ENCODE measurements at regions of chr2 and their contacts with region 1.

Region 1: GRCh38 chr2:44087036-44087713 is 81.5 kb upstream of the PPM1B start:
- DNase-seq: peak; percentile 13
- H3K4me3 ChIP-seq: peak overlapping the region; percentile 27
- H3K27me3 ChIP-seq: no peaks in the 10 kb centered on the region
- CTCF ChIP-seq: peak; percentile 96

Region 2: DNA sequence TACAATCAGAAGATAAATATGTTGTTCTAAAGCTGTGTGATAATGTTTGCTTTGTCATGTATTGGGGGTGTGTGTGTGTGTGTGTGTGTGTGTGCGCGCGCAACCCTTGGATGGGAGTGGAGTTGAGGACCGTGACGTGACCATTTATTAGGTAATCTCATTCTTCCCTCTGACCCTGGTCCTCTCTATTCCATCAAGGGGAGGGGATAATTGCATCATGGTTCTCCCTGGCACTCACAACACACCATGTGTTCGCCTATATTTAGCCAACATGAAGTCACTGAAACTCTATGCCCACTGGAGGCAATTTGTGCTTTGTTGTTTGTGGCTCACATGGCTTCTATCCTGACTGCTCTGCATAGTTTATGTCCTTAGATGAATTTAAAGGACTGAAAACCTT is 11.6 kb before region 1 on chr2:
- CTCF ChIA-PET with region 1: interaction called, 11 read pairs
- POLR2A ChIA-PET with region 1: no interaction called
- DNase-seq: peak; percentile 22
- H3K4me3 ChIP-seq: no peak overlapping the region
- H3K27me3 ChIP-seq: no peaks in the 10 kb centered on the region
- CTCF ChIP-seq: no peak

Region 3: GRCh38 chr2:44098050-44098449 is 10.9 kb after region 1 on chr2:
- CTCF ChIA-PET with region 1: interaction called, 13 read pairs
- POLR2A ChIA-PET with region 1: no interaction called
- DNase-seq: no peak
- H3K4me3 ChIP-seq: no peak overlapping the region
- H3K27me3 ChIP-seq: peaks cover 4% of the 10 kb centered on the region; the same call in 1 of the 2 replicates
- CTCF ChIP-seq: no peak

Region 4: GRCh38 chr2:44112071-44112470 is 24.9 kb after region 1 on chr2:
- CTCF ChIA-PET with region 1: no interaction called
- POLR2A ChIA-PET with region 1: no interaction called
- DNase-seq: no peak
- H3K4me3 ChIP-seq: no peak overlapping the region
- H3K27me3 ChIP-seq: no peaks in the 10 kb centered on the region
- CTCF ChIP-seq: no peak

Region 5: DNA sequence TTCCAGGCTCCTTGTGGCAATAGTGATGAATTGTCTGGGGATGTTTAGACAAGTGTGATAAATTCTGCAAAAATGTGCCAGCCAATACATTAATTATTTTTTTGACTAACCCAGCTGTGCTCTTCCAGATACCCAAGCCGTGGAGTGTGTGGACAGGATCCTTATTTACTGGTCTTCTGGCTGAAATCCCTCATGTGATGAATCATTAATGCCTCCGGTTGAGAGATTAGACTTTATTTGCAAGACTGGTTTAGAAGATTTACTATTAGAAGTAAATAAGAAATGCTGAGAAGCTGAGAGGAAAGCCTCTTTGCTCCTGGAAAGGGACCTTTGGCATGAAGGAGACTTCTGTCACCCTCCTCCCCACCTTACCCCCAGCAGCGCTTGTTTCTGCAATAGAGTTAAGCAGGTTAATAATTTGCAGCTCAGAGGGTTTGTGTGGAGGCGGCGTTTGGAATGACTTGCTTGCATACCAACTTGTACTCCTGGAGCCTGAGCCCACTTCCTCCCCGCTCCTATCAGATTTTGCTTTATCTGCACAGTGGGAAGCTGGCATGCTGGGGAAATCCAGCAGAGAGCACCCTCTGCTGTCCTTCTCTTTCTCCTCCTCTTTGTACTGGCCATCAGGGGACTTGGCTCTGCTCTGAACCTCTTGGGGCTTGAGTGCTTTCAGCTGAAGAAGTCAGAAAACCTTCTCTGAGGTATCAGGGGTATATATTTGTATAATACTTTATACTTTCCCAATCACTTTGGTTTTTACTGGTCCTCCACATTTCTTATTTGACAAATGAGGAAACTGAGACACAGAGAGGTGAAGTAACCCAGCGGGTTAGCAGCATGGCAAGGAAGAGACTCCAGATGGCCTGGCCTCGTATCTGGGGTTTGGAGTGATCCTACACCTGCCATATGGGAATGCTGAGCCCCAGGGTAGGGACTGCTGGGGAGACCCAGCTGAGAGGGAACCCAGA is 204.4 kb after region 1 on chr2:
- CTCF ChIA-PET with region 1: interaction called, 15 read pairs
- POLR2A ChIA-PET with region 1: no interaction called
- DNase-seq: peak; percentile 39
- H3K4me3 ChIP-seq: no peak overlapping the region
- H3K27me3 ChIP-seq: no peaks in the 10 kb centered on the region
- CTCF ChIP-seq: peak; percentile 76

Region 6: GRCh38 chr2:44470151-44470550 is 383.0 kb after region 1 on chr2:
- CTCF ChIA-PET with region 1: no interaction called
- POLR2A ChIA-PET with region 1: no interaction called
- DNase-seq: no peak
- H3K4me3 ChIP-seq: no peak overlapping the region
- H3K27me3 ChIP-seq: no peaks in the 10 kb centered on the region
- CTCF ChIP-seq: no peak

Region 7: GRCh38 chr2:44490726-44491125 is 403.6 kb after region 1 on chr2:
- CTCF ChIA-PET with region 1: no interaction called
- POLR2A ChIA-PET with region 1: no interaction called
- DNase-seq: no peak
- H3K4me3 ChIP-seq: no peak overlapping the region
- H3K27me3 ChIP-seq: no peaks in the 10 kb centered on the region
- CTCF ChIP-seq: no peak